CD4-positive, alpha-beta memory T cell (primary cell): ENCODE measurements at regions of chr12 and their contacts with region 1.

Region 1: GRCh38 chr12:123983822-123984485 is 10.9 kb downstream of the ZNF664 start:
- DNase-seq: peak; percentile 45 to 55 (median 54)
- H3K4me3 ChIP-seq: no peak overlapping the region
- H3K4me3 Mint-ChIP-seq: no peak overlapping the region
- H3K27ac ChIP-seq: no peak overlapping the region
- H3K27ac Mint-ChIP-seq: peak overlapping the region in 1 of 7 donors; percentile 81
- H3K4me1 ChIP-seq: no peaks in the 10 kb centered on the region
- H3K4me1 Mint-ChIP-seq: peaks cover 14 to 21% (median 15%) of the 10 kb centered on the region in 4 donors
- H3K27me3 ChIP-seq: no peaks in the 10 kb centered on the region
- H3K27me3 Mint-ChIP-seq: no peaks in the 10 kb centered on the region

Region 2: DNA sequence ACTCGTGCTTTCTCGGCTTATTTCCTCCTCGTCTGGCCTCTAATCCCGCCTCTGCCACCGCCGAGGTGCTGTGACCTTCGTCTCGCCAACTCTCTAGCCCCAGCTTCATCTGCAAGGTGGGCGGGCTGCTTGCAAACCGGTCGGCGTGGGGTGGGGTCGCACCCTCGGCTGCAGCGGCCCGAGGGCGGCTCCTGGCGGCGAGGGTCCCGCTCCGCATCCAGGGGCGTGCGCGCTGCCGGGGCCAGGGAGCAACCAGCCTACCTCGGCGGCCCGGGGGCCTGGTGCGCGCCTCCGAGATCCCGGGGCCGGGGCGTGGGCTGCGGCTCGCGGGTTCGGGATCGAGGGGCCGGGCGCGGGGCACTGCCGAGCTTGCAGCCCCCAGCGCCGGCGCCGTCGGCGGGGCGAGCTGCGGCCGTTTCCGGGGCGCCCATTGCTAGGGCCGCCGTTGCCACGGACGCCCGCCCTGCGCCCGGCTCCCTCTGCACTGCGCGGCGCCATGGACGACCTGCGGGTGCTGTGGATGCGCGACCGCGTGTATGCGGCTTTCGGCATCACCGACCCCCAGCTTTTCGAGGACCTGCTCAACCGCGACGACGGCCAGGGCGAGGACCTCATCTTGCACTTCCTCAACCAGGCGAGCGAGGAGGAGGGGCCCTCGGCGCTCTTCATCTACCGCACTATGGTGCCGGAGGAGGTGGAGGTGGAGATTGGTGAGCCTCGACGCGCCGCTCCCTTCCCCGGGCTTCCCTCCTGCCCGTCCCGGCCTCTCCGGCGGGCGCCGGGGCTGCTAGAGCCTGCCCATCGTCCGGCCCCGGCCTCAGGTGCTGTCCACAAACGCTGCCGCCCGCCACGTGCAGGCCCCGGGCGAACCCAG is 221.9 kb before region 1 on chr12 and contains the start of gene DNAH10:
- CTCF ChIA-PET with region 1: no interaction called
- POLR2A ChIA-PET with region 1: no interaction called
- intact Hi-C with region 1: loop called (anchors 5 kb)
- DNase-seq: peak in 4 of 5 donors; percentile 3 to 15 (median 6)
- H3K4me3 ChIP-seq: peak within 1 kb of the TSS in 1 of 2 donors; percentile 27
- H3K4me3 Mint-ChIP-seq: peak within 1 kb of the TSS; percentile 81 to 89 (median 83)
- H3K27ac ChIP-seq: no peak within 1 kb of the TSS
- H3K27ac Mint-ChIP-seq: no peak within 1 kb of the TSS
- H3K4me1 ChIP-seq: peaks cover 7% of the 10 kb centered on the region
- H3K4me1 Mint-ChIP-seq: peaks cover 0 to 5% (median 0%) of the 10 kb centered on the region in 4 donors
- H3K27me3 ChIP-seq: no peaks in the 10 kb centered on the region
- H3K27me3 Mint-ChIP-seq: peaks cover 3 to 6% of the 10 kb centered on the region in 2 donors
- total RNA-seq, gene DNAH10: 0.06 to 0.08 TPM

Region 3: DNA sequence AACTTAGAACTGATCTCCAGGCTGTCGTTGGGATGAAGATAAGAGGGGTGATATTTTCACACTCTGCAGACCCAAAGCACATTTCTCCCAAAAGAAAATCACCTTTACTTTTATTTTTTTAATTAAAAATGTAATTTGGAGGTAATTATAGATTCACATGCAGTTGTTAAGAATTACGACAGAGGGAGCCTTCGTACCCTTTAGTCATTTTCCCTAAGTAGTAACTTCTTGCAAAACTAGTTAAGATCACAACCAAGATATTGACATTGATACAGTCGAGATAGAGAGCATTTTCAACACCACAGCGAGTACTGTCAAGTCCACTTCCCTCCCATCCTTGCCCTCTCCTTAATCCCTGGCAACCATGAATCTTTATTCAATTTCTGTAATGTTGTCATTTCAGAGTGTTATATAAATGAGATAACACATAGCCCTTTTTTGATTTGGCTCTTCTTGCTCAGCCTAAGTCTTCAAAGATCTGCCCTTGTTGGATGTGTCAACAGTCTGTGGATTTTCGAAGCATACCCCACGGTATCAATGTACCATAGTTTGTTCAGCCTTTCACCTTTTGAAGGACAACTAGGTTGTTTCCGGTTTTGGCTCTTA is 182.3 kb before region 1 on chr12:
- CTCF ChIA-PET with region 1: no interaction called
- POLR2A ChIA-PET with region 1: no interaction called
- intact Hi-C with region 1: loop called (anchors 5 kb)
- DNase-seq: no peak
- H3K4me3 ChIP-seq: no peak overlapping the region
- H3K4me3 Mint-ChIP-seq: no peak overlapping the region
- H3K27ac ChIP-seq: no peak overlapping the region
- H3K27ac Mint-ChIP-seq: no peak overlapping the region
- H3K4me1 ChIP-seq: no peaks in the 10 kb centered on the region
- H3K4me1 Mint-ChIP-seq: no peaks in the 10 kb centered on the region
- H3K27me3 ChIP-seq: no peaks in the 10 kb centered on the region
- H3K27me3 Mint-ChIP-seq: peaks cover 6 to 7% of the 10 kb centered on the region in 2 donors

Region 4: GRCh38 chr12:123905319-123905925 is 78.5 kb before region 1 on chr12:
- CTCF ChIA-PET with region 1: interaction called, 117 read pairs
- POLR2A ChIA-PET with region 1: no interaction called
- intact Hi-C with region 1: loop called (anchors 1 kb)
- DNase-seq: peak; percentile 61 to 73 (median 65)
- H3K4me3 ChIP-seq: no peak overlapping the region
- H3K4me3 Mint-ChIP-seq: no peak overlapping the region
- H3K27ac ChIP-seq: no peak overlapping the region
- H3K27ac Mint-ChIP-seq: peak overlapping the region in 1 of 7 donors; percentile 47
- H3K4me1 ChIP-seq: no peaks in the 10 kb centered on the region
- H3K4me1 Mint-ChIP-seq: peaks cover 8 to 14% (median 10%) of the 10 kb centered on the region in 4 donors
- H3K27me3 ChIP-seq: no peaks in the 10 kb centered on the region
- H3K27me3 Mint-ChIP-seq: peaks cover 8 to 9% of the 10 kb centered on the region in 2 donors

Region 5: GRCh38 chr12:123910761-123911193 is 73.2 kb before region 1 on chr12:
- CTCF ChIA-PET with region 1: interaction called, 117 read pairs
- POLR2A ChIA-PET with region 1: no interaction called
- intact Hi-C with region 1: loop called (anchors 1 kb)
- DNase-seq: peak in 2 of 5 donors; percentile 5 to 7
- H3K4me3 ChIP-seq: no peak overlapping the region
- H3K4me3 Mint-ChIP-seq: peak overlapping the region in 2 of 8 donors; percentile 26 to 33
- H3K27ac ChIP-seq: no peak overlapping the region
- H3K27ac Mint-ChIP-seq: peak overlapping the region; percentile 55 to 86 (median 78)
- H3K4me1 ChIP-seq: no peaks in the 10 kb centered on the region
- H3K4me1 Mint-ChIP-seq: peaks cover 5 to 15% (median 10%) of the 10 kb centered on the region in 4 donors
- H3K27me3 ChIP-seq: no peaks in the 10 kb centered on the region
- H3K27me3 Mint-ChIP-seq: peaks cover 0 to 2% of the 10 kb centered on the region in 2 donors

Region 6: DNA sequence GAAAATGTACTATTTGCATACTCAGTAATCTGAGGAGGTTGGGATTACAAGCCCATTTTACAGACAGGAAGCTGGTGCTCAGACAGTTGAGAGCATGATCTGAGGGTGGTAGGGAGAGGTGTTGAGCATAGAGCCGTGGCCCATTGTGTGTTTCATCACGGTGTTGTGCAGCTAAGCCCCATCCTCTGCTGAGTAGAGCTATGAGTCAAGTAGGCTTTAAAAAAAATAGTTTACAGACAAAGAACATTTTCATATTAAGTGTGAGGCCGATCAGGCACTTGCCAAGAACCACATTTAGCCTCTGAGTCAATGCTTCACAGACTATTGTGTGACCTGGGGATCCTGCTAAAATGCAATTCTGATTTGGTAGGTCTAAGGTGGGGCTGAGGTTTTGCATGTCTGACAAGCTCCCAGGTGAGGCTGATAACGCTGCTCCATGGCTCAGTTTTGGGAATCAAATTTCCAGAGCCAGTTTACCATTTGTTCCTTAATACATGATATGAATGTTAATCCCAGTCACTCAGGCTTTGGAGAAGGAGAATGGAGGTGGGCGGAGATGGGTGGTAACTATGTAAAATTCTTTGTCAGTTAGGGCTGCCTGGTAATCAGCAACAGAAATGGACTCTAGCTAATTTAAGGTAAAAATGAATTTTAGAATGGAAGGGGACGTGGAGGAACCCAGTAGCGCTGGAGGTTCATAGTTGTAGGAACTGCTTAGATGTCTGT is 11.2 kb after region 1 on chr12:
- CTCF ChIA-PET with region 1: interaction called, 15 read pairs
- POLR2A ChIA-PET with region 1: no interaction called
- intact Hi-C with region 1: no loop called
- DNase-seq: no peak
- H3K4me3 ChIP-seq: no peak overlapping the region
- H3K4me3 Mint-ChIP-seq: no peak overlapping the region
- H3K27ac ChIP-seq: no peak overlapping the region
- H3K27ac Mint-ChIP-seq: no peak overlapping the region
- H3K4me1 ChIP-seq: no peaks in the 10 kb centered on the region
- H3K4me1 Mint-ChIP-seq: peaks cover 19 to 32% (median 26%) of the 10 kb centered on the region in 4 donors
- H3K27me3 ChIP-seq: no peaks in the 10 kb centered on the region
- H3K27me3 Mint-ChIP-seq: no peaks in the 10 kb centered on the region